CD14-positive monocyte (primary cell): ENCODE measurements at regions of chr6 and their contacts with region 1.

Region 1: DNA sequence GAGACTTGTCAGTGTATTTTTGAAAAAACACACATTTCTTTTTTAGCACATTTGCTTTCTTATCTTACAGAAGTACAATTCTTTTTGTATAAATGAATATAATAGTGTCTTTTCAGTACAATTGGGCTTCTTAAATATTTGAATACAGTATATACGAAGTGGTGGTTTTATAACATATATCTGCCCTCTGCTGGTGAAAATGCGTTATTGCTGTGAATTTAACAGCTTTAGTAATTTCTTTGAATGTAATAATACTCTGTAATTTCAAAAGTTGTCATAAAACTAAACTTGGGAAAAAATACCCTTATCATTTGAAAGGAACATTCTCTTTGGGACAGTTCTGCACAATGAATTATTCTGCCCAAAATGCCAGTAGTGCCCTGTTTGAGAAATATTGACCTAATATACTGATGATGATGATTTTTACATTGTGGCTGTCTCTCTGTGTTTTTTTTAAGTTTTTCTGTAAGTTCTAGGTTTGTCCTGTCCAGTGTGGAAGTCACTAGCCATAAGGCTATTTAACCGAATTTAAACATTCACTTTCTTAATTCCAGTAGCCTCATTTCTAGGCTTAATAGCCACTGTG is 19.0 kb downstream of the SMAP1 start:
- DNase-seq: peak; percentile 19 to 60 (median 38)
- H3K4me3 ChIP-seq: no peak overlapping the region
- H3K4me3 Mint-ChIP-seq: no peak overlapping the region
- H3K27ac ChIP-seq: no peak overlapping the region
- H3K27ac Mint-ChIP-seq: no peak overlapping the region
- H3K4me1 ChIP-seq: no peaks in the 10 kb centered on the region
- H3K4me1 Mint-ChIP-seq: peaks cover 5% of the 10 kb centered on the region
- H3K27me3 ChIP-seq: no peaks in the 10 kb centered on the region
- H3K27me3 Mint-ChIP-seq: no peaks in the 10 kb centered on the region
- CTCF ChIP-seq: peak; percentile 82

Region 2: GRCh38 chr6:70315079-70315751 is 371.4 kb before region 1 on chr6:
- intact Hi-C with region 1: no loop called
- DNase-seq: no peak
- H3K4me3 ChIP-seq: no peak overlapping the region
- H3K4me3 Mint-ChIP-seq: no peak overlapping the region
- H3K27ac ChIP-seq: no peak overlapping the region
- H3K27ac Mint-ChIP-seq: no peak overlapping the region
- H3K4me1 ChIP-seq: no peaks in the 10 kb centered on the region
- H3K4me1 Mint-ChIP-seq: no peaks in the 10 kb centered on the region
- H3K27me3 ChIP-seq: no peaks in the 10 kb centered on the region
- H3K27me3 Mint-ChIP-seq: peaks cover 2 to 6% (median 3%) of the 10 kb centered on the region in 3 donors
- CTCF ChIP-seq: no peak

Region 3: GRCh38 chr6:70520575-70520974 is 166.1 kb before region 1 on chr6:
- intact Hi-C with region 1: loop called (anchors 5 kb)
- DNase-seq: peak; percentile 1 to 24 (median 8)
- H3K4me3 ChIP-seq: no peak overlapping the region
- H3K4me3 Mint-ChIP-seq: no peak overlapping the region
- H3K27ac ChIP-seq: no peak overlapping the region
- H3K27ac Mint-ChIP-seq: no peak overlapping the region
- H3K4me1 ChIP-seq: no peaks in the 10 kb centered on the region
- H3K4me1 Mint-ChIP-seq: no peaks in the 10 kb centered on the region
- H3K27me3 ChIP-seq: no peaks in the 10 kb centered on the region
- H3K27me3 Mint-ChIP-seq: peaks cover 0 to 2% (median 0%) of the 10 kb centered on the region in 3 donors
- CTCF ChIP-seq: peak; percentile 58

Region 4: GRCh38 chr6:70586114-70586513 is 100.5 kb before region 1 on chr6:
- intact Hi-C with region 1: loop called in 1 of 2 experiments (anchors 10 kb)
- DNase-seq: no peak
- H3K4me3 ChIP-seq: no peak overlapping the region
- H3K4me3 Mint-ChIP-seq: no peak overlapping the region
- H3K27ac ChIP-seq: no peak overlapping the region
- H3K27ac Mint-ChIP-seq: no peak overlapping the region
- H3K4me1 ChIP-seq: no peaks in the 10 kb centered on the region
- H3K4me1 Mint-ChIP-seq: no peaks in the 10 kb centered on the region
- H3K27me3 ChIP-seq: no peaks in the 10 kb centered on the region
- H3K27me3 Mint-ChIP-seq: peaks cover 0 to 2% (median 1%) of the 10 kb centered on the region in 3 donors
- CTCF ChIP-seq: no peak

Region 5: GRCh38 chr6:70616728-70617260 is 69.8 kb before region 1 on chr6:
- intact Hi-C with region 1: no loop called
- DNase-seq: no peak
- H3K4me3 ChIP-seq: no peak overlapping the region
- H3K4me3 Mint-ChIP-seq: no peak overlapping the region
- H3K27ac ChIP-seq: no peak overlapping the region
- H3K27ac Mint-ChIP-seq: no peak overlapping the region
- H3K4me1 ChIP-seq: no peaks in the 10 kb centered on the region
- H3K4me1 Mint-ChIP-seq: no peaks in the 10 kb centered on the region
- H3K27me3 ChIP-seq: no peaks in the 10 kb centered on the region
- H3K27me3 Mint-ChIP-seq: peaks cover 4 to 5% (median 4%) of the 10 kb centered on the region in 3 donors
- CTCF ChIP-seq: no peak

Region 6: GRCh38 chr6:70823651-70824050 is 137.0 kb after region 1 on chr6:
- intact Hi-C with region 1: no loop called
- DNase-seq: no peak
- H3K4me3 ChIP-seq: no peak overlapping the region
- H3K4me3 Mint-ChIP-seq: no peak overlapping the region
- H3K27ac ChIP-seq: no peak overlapping the region
- H3K27ac Mint-ChIP-seq: no peak overlapping the region
- H3K4me1 ChIP-seq: no peaks in the 10 kb centered on the region
- H3K4me1 Mint-ChIP-seq: no peaks in the 10 kb centered on the region
- H3K27me3 ChIP-seq: no peaks in the 10 kb centered on the region
- H3K27me3 Mint-ChIP-seq: no peaks in the 10 kb centered on the region
- CTCF ChIP-seq: no peak